Astrocyte of the cerebellum (primary cell): ENCODE measurements at regions of chr18 and their contacts with region 1.

Region 1: GRCh38 chr18:76398896-76399612 is 96.0 kb downstream of the ZNF516 start:
- DNase-seq: peak; percentile 47
- H3K4me3 ChIP-seq: no peak overlapping the region
- CTCF ChIP-seq: peak; percentile 97

Region 2: DNA sequence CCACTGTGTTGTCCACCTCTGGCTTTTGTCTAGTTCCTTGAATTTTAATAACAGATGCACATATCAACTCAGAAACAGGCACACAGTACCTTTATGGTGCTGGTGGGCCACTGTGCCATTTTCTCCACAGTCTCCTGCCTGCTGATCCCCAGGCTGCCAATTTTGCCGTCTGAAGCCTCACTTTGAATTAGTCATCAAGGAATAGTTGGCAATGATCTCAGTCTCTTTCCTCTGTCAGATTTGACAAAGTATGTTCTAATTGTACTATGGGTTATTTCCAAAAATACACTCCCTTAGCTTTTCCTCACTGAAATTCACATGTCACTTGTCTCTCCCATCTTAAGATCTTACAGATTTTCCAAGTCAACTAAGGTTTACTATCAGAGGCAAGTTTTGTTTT is 44.7 kb before region 1 on chr18:
- in situ Hi-C with region 1: no loop called
- DNase-seq: peak; percentile 71
- H3K4me3 ChIP-seq: no peak overlapping the region
- CTCF ChIP-seq: no peak

Region 3: DNA sequence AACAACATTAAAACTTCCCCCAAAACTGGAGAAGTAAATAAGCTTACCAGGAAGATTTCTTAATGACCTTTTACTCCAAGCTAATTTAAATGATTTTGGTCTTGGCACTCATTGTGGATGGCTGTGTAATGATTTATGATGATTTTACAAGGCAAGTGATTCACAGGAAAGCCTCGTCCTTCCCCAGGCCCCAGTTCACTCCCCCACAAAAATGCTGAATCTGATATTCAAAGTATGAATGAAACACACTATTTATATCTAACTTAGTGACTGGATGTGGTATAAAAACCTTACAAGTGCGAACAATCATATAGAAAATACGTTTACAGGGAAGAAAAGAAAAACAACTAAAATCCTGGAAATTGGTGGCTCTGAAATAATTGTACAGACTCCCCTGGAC is 46.2 kb after region 1 on chr18:
- in situ Hi-C with region 1: no loop called
- DNase-seq: peak; percentile 66
- H3K4me3 ChIP-seq: no peak overlapping the region
- CTCF ChIP-seq: no peak

Region 4: GRCh38 chr18:76459687-76460350 is 60.8 kb after region 1 on chr18:
- in situ Hi-C with region 1: no loop called
- DNase-seq: peak; percentile 100
- H3K4me3 ChIP-seq: peak overlapping the region; percentile 22
- CTCF ChIP-seq: peak; percentile 6

Region 5: DNA sequence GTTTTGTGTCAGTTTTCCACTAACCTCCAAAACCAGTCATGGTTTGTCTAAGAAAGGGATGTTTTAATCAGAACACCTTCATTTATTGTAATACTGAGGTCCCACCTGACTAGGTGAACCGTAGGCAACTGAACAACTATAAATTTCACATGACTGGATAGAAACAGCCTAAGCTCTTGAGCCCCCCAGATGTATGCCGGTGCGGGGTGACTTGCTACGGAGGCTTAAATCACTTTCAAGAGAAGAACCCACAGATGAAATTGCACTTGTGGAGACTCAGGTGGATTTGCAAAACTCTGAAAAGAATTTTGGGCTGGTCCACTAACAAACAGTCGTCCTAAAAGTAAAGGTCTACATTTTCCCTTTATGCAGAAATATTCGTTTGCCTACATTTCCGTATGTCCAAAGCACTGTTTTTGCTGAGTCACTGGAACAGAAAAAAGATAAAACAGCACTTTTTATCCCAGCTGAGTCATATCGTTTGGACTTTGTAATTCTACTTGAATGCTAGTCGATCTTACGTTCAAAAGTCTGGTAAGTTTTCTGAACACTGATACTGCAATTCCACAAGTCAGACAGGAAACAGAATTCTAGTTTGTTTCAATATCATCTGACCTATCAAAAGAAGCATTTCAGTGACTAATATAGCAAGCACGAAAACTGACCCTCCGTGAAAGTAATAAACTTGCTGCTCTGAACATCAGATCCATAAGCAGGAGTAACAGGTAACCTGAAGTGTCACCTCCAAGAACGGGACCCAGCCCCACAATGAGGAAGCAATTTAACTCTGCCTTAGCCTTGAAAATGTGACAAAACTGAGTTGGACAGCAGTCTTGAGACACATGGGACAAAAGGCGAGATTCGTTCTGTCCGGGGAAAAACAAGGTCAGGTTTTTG is 77.9 kb after region 1 on chr18:
- in situ Hi-C with region 1: no loop called
- DNase-seq: peak; percentile 66
- H3K4me3 ChIP-seq: peak overlapping the region; percentile 18
- CTCF ChIP-seq: no peak

Region 6: DNA sequence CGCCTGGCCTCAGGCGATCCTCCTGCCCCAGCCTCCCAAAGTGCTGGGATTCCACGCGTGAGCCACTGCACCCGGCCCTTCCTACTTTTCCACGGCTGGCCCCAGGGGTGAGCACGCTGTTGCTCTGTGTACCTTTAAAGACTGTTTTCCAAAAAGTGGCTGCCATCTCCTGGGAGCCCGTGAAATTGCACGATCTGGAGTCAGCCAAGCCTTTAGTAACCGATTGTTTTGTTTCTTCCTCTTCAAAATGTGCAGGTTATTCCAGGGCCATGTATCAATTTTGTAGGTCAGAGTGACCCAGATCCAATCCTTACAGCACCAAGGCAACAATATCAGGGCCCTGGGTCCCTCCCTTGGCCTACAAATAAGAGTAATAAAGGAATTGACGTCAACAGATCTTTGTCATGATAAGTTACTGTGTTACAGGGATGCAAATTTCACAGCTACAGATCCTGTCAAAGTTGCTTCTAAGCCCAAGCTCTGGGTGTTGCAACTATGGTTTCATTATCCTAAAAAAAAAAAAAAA is 287.7 kb after region 1 on chr18:
- in situ Hi-C with region 1: loop called (anchors 25 kb)
- DNase-seq: peak; percentile 42
- H3K4me3 ChIP-seq: no peak overlapping the region
- CTCF ChIP-seq: peak; percentile 70